ENCODE measurements at regions of chr18 and their contacts with region 1.

Region 1: DNA sequence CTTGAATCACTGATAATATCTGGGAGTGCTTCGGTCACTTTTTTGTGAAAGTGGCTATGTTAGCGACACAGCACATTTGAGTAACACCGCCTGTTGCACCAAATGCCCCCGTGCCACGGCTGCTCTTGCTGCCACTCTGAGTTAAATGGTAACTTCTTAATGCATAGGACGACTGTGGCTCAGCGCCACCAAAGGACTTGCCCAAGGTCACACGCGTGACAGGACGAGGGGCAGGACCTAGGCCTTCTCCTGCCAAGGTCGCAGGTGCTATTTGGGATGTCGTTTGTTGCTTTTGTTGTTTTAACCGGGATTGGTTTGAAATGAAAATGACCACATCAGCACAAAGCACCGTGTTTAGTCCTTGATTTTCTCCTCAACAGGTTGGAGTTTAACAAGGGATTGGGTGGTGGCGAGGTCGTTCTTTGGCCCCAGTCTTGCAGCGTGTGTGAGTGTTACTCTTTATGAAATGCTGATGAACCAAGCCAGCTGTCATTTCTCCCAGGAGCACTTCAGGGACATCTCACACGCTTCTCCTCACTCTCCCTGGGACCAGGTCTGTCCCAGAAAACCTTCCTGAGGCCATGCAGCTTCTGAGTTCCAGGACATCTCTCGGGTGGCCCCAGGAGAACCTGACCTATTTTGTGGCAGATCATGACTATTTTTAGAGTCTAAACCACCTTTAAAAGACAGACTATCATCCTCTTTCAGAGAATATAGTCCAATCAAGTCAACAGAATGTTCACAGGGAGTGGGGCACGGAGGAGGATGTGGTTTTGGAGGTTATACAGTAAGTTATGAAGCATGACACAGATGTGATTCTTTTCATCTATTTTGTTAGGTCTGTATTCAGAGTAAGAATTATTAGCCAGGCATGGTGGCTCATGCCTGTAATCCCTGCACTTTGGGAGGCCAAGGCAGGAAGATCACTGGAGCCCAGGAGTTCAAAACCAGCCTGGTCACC is 49.9 kb downstream of the MTCL1 start:
- DNase-seq: no peak
- H3K4me3 ChIP-seq: no peak overlapping the region
- H3K27ac ChIP-seq: no peak overlapping the region
- H3K4me1 ChIP-seq: no peaks in the 10 kb centered on the region
- H3K27me3 ChIP-seq: no peaks in the 10 kb centered on the region
- CTCF ChIP-seq: no peak
- POLR2A ChIP-seq: no peak

Region 2: GRCh38 chr18:8188184-8188583 is 567.1 kb before region 1 on chr18:
- intact Hi-C with region 1: no loop called
- DNase-seq: no peak
- H3K4me3 ChIP-seq: no peak overlapping the region
- H3K27ac ChIP-seq: no peak overlapping the region
- H3K4me1 ChIP-seq: no peaks in the 10 kb centered on the region
- H3K27me3 ChIP-seq: no peaks in the 10 kb centered on the region
- CTCF ChIP-seq: no peak
- POLR2A ChIP-seq: no peak

Region 3: DNA sequence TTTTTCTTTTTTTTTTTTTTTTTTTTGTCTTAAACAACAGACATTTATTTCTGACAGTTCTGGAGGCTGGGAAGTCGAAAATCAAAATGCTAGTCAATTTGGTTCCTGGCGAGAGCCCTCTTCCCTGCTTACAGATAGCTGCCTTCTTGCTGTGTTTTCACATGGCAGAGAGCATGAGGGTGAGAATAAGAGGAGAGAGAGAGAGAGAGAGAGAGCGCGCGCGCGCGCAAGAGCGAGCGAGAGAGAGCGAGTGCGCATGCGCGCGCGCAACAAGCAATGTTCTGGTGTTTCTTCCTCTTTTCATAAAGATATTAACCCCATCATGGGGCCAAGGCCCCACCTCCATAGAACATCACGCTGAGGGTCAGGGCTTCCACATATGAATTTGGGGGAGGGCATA is 29.0 kb before region 1 on chr18:
- intact Hi-C with region 1: loop called (anchors 2 kb)
- DNase-seq: no peak
- H3K4me3 ChIP-seq: no peak overlapping the region
- H3K27ac ChIP-seq: no peak overlapping the region
- H3K4me1 ChIP-seq: no peaks in the 10 kb centered on the region
- H3K27me3 ChIP-seq: no peaks in the 10 kb centered on the region
- CTCF ChIP-seq: no peak
- POLR2A ChIP-seq: no peak

Region 4: DNA sequence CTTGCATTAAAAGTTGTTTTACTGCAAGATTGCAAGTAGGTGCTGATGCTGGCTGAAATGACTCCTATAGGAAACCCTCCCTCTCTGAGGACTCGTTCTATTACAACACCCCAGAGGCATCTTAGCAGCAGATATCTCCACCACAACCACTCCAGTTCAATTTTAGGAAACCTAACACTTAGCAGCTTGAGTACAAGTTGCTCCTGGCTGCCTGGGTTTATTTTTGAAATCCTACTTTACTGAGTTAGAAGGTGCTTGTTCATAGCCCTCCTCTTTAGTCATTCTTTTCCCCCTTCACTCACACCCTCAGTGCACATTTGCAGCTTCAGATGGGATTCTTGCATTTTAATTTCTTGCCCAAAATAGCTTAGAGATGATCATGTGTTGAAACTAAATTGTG is 61.5 kb after region 1 on chr18:
- intact Hi-C with region 1: no loop called
- DNase-seq: no peak
- H3K4me3 ChIP-seq: no peak overlapping the region
- H3K27ac ChIP-seq: no peak overlapping the region
- H3K4me1 ChIP-seq: no peaks in the 10 kb centered on the region
- H3K27me3 ChIP-seq: no peaks in the 10 kb centered on the region
- CTCF ChIP-seq: no peak
- POLR2A ChIP-seq: no peak

Measured in breast epithelium (tissue), 4 donors.